ENCODE measurements at regions of chr14 and their contacts with region 1.

Region 1: GRCh38 chr14:21014761-21015190 is 10.1 kb downstream of the NDRG2 start:
- DNase-seq: peak; percentile 23
- H3K4me3 ChIP-seq: no peak overlapping the region
- CTCF ChIP-seq: peak; percentile 82

Region 2: GRCh38 chr14:20830831-20831230 is 183.9 kb before region 1 on chr14:
- CTCF ChIA-PET with region 1: no interaction called
- POLR2A ChIA-PET with region 1: no interaction called
- DNase-seq: no peak
- H3K4me3 ChIP-seq: no peak overlapping the region
- CTCF ChIP-seq: no peak

Region 3: DNA sequence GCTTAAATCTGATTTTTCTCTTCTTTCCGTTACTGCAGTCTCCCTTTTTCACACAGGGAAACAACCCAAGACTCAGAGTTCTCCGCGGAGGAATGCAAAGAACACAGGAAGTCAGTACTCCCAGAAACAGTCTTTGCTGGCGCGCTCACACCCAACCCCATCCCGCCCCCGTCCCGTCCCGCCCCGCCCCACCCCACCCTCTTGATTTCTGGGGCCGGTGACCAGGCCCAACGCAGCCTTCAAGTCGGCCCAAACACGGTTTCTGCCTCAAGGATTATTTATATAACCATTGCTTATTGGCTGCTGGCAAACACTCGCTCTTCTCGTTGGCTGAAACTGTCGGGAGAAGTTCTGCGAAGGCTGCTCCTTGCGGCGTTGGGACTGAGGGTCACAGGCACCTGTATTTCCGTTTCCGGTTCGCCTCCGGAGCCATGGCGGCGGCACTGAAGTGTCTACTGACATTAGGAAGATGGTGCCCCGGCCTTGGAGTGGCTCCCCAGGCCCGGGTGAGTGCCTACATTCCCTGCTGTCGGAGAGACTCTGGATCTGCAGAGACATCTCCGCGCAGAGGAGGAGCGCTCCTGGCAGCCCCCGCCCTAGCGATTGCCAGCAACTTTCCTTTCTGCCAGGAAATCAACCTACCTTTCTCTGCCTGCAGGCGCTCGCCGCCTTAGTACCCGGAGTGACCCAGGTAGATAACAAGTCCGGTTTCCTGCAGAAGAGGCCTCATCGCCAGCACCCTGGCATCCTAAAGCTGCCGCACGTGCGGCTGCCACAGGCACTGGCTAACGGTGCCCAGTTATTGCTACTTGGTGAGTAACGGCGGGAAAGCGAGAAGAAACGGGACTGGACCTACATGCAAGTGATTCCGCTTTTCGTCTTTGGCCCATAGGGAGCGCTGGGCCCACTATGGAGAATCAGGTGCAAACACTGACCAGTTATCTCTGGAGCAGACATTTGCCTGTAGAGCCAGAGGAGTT is 24.9 kb before region 1 on chr14 and contains the start of gene METTL17:
- CTCF ChIA-PET with region 1: interaction called, 288 read pairs
- POLR2A ChIA-PET with region 1: no interaction called
- DNase-seq: peak; percentile 91
- H3K4me3 ChIP-seq: peak within 1 kb of the TSS; percentile 87
- CTCF ChIP-seq: peak; percentile 45

Region 4: GRCh38 chr14:21039585-21040369 is 25.0 kb after region 1 on chr14:
- CTCF ChIA-PET with region 1: interaction called, 287 read pairs
- POLR2A ChIA-PET with region 1: interaction called, 3 read pairs
- DNase-seq: peak; percentile 29
- H3K4me3 ChIP-seq: no peak overlapping the region
- CTCF ChIP-seq: peak; percentile 56

Region 5: DNA sequence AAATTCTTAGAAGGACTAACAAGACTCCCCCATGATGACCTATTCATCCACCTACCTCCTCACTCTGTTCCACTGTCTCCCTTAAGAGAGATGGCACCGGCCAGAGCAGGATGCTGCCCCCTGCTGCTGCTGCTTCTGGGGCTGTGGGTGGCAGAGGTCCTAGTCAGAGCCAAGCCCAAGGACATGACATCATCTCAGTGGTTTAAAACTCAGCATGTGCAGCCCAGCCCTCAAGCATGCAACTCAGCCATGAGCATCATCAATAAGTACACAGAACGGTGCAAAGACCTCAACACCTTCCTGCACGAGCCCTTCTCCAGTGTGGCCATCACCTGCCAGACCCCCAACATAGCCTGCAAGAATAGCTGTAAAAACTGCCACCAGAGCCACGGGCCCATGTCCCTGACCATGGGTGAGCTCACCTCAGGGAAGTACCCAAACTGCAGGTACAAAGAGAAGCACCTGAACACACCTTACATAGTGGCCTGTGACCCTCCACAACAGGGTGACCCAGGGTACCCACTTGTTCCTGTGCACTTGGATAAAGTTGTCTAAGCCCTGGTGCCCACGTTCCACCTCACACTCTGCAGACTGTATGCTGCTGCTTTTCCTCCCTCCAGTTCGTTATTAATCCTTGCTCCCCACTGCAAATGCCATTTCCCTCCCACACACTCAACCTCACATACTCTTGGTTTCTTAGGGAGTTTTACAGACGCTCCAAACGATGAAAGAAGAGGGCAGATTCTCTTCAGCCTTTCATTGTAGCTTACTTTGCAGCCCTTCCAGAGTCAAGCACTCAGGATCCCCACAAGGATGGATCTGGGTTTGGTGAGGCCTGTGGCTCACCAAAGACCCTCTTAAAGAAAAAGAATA is 43.3 kb after region 1 on chr14 and contains the start of gene RNASE8:
- CTCF ChIA-PET with region 1: interaction called, 137 read pairs
- POLR2A ChIA-PET with region 1: no interaction called
- DNase-seq: no peak
- H3K4me3 ChIP-seq: no peak within 1 kb of the TSS
- CTCF ChIP-seq: peak; percentile 36

Region 6: DNA sequence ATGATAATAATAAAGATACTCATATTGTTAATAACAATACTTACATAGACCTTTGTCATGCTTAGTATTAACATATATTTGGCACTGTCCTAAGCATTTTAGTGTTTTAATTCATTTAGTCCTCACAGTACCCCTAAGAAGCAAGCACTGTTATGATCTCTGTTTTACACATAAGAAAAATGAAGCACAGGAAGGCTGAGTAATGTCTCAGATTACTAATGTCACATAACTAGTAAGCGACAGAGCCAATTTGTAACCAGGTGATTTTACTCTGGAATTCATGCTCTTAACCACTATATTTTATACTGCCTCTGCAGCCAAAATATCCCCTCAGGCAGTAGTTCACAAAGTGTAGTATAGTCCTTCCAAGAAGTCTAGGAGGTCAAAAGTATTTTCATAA is 106.3 kb after region 1 on chr14:
- CTCF ChIA-PET with region 1: interaction called, 10 read pairs
- POLR2A ChIA-PET with region 1: no interaction called
- DNase-seq: no peak
- H3K4me3 ChIP-seq: no peak overlapping the region
- CTCF ChIP-seq: no peak

Measured in AG04449 (cell line).